CD4-positive, alpha-beta T cell (primary cell): ENCODE measurements at regions of chr18 and their contacts with region 1.

Region 1: DNA sequence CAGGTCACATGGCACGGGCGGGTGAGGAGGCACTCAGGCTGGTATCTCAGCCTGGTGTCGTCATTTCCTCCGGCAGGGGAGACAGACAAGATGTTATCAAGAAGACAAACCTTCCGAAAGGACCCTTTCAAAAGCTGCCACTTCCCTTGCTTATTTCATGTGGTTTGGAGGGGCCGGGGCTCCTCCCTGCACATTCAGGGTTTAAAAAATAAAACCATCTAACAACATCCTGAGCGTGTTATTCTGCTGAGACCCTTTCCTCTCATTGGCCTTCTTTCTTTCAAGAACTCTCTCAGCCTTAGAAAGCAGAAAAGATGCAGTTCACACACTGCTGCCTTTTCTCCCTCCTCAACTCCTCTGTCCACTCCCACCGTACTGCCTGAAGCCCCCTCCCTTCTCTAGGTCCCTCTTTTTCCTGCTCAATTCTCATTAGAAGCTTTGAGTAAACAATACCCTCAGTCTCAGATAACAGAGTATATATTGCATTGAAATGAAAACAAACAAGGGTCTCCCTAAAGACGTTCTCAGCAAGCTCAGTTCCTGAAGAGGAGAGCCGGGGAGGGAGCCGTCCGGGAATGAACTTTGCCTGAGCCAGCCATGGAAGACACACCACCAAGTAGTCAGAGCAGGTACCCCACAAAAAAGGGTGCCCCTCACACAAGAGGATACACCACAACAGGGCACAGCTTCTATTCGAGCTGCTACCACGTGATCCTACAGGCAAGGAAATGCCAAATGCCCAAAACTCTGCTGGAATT is 9.7 kb downstream of the SMAD7 start:
- DNase-seq: peak; percentile 71 to 97 (median 80)
- ATAC-seq: peak; percentile 83
- H3K4me3 ChIP-seq: peak overlapping the region; percentile 26
- H3K4me3 Mint-ChIP-seq: peak overlapping the region; percentile 87
- H3K27ac ChIP-seq: peak overlapping the region; percentile 51
- H3K27ac Mint-ChIP-seq: peak overlapping the region; percentile 92
- H3K4me1 ChIP-seq: peaks cover 93% of the 10 kb centered on the region
- H3K4me1 Mint-ChIP-seq: peaks cover 92% of the 10 kb centered on the region
- H3K27me3 ChIP-seq: no peaks in the 10 kb centered on the region
- H3K27me3 Mint-ChIP-seq: no peaks in the 10 kb centered on the region
- CTCF ChIP-seq: no peak

Region 2: GRCh38 chr18:48007955-48008701 is 932.9 kb before region 1 on chr18:
- CTCF ChIA-PET with region 1: no interaction called
- POLR2A ChIA-PET with region 1: no interaction called
- intact Hi-C with region 1: no loop called
- DNase-seq: peak; percentile 12 to 76 (median 32)
- ATAC-seq: peak; percentile 89
- H3K4me3 ChIP-seq: peak overlapping the region; percentile 46
- H3K4me3 Mint-ChIP-seq: peak overlapping the region; percentile 77
- H3K27ac ChIP-seq: no peak overlapping the region
- H3K27ac Mint-ChIP-seq: no peak overlapping the region
- H3K4me1 ChIP-seq: peaks cover 12% of the 10 kb centered on the region
- H3K4me1 Mint-ChIP-seq: peaks cover 6% of the 10 kb centered on the region
- H3K27me3 ChIP-seq: peaks cover 10% of the 10 kb centered on the region in 2 experiments
- H3K27me3 Mint-ChIP-seq: peaks cover 19% of the 10 kb centered on the region
- CTCF ChIP-seq: peak; percentile 23

Region 3: GRCh38 chr18:48711651-48712486 is 229.2 kb before region 1 on chr18:
- CTCF ChIA-PET with region 1: no interaction called
- POLR2A ChIA-PET with region 1: no interaction called
- intact Hi-C with region 1: no loop called
- DNase-seq: peak in 6 of 14 experiments; percentile 4 to 54 (median 18)
- ATAC-seq: no peak
- H3K4me3 ChIP-seq: no peak overlapping the region
- H3K4me3 Mint-ChIP-seq: no peak overlapping the region
- H3K27ac ChIP-seq: no peak overlapping the region
- H3K27ac Mint-ChIP-seq: no peak overlapping the region
- H3K4me1 ChIP-seq: peaks cover 8% of the 10 kb centered on the region
- H3K4me1 Mint-ChIP-seq: no peaks in the 10 kb centered on the region
- H3K27me3 ChIP-seq: no peaks in the 10 kb centered on the region
- H3K27me3 Mint-ChIP-seq: no peaks in the 10 kb centered on the region
- CTCF ChIP-seq: peak; percentile 11

Region 4: DNA sequence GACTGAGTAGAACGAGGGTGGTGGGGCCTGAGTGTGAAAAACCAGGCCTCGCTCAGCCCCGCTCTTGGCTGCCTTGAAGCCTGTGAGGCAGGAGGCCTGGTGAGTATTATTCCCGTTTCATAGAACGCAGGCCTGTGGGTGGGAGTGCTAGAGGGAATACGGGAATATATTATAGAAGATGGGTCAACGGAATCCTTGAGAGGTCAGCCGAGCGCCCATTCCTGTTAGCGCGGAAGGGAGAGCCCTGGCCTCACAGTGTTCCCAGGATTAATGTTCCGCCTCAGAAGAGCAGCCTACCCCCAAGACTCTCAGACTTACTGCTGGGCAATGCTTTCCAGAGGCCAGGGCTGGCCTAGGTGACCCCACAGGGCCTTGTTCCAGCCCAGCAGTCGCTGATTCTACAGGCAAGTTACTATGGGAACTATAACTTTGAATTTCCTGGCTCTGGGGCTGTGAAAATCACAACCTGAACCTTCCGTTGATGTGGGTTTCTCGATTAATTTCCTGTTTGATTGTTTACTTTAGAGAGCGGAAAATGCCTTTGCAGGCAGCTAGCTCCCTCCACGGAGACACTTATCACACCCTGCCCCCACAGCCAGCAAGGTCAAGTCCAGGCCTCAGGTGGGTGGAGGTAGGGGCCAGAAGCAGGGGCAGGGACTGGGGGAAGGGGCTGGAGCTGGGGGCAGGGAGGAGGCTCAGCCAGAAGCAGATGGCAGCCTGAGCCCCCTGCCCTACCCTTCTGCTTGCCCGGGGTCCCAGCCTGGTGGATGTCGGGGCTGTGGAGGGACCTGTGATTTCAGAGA is 98.6 kb before region 1 on chr18:
- CTCF ChIA-PET with region 1: no interaction called
- POLR2A ChIA-PET with region 1: interaction called, 12 read pairs
- intact Hi-C with region 1: loop called in 1 of 2 experiments (anchors 5 kb)
- DNase-seq: peak in 13 of 14 experiments; percentile 27 to 94 (median 37)
- ATAC-seq: peak; percentile 87
- H3K4me3 ChIP-seq: peak overlapping the region; percentile 13
- H3K4me3 Mint-ChIP-seq: peak overlapping the region; percentile 40
- H3K27ac ChIP-seq: peak overlapping the region; percentile 58 to 81
- H3K27ac Mint-ChIP-seq: peak overlapping the region; percentile 92
- H3K4me1 ChIP-seq: peaks cover 75% of the 10 kb centered on the region
- H3K4me1 Mint-ChIP-seq: peaks cover 88% of the 10 kb centered on the region
- H3K27me3 ChIP-seq: no peaks in the 10 kb centered on the region
- H3K27me3 Mint-ChIP-seq: no peaks in the 10 kb centered on the region
- CTCF ChIP-seq: no peak

Region 5: GRCh38 chr18:48922801-48923730 is 18.0 kb before region 1 on chr18:
- CTCF ChIA-PET with region 1: interaction called, 4 read pairs
- POLR2A ChIA-PET with region 1: interaction called, 28 read pairs
- intact Hi-C with region 1: no loop called
- DNase-seq: peak in 4 of 14 experiments; percentile 44 to 68 (median 54)
- ATAC-seq: no peak
- H3K4me3 ChIP-seq: peak overlapping the region; percentile 43
- H3K4me3 Mint-ChIP-seq: peak overlapping the region; percentile 85
- H3K27ac ChIP-seq: no peak overlapping the region
- H3K27ac Mint-ChIP-seq: peak overlapping the region; percentile 74
- H3K4me1 ChIP-seq: peaks cover 67% of the 10 kb centered on the region
- H3K4me1 Mint-ChIP-seq: peaks cover 79% of the 10 kb centered on the region
- H3K27me3 ChIP-seq: no peaks in the 10 kb centered on the region
- H3K27me3 Mint-ChIP-seq: no peaks in the 10 kb centered on the region
- CTCF ChIP-seq: no peak

Region 6: GRCh38 chr18:48928787-48929186 is 12.2 kb before region 1 on chr18:
- CTCF ChIA-PET with region 1: interaction called, 5 read pairs
- POLR2A ChIA-PET with region 1: interaction called, 28 read pairs
- intact Hi-C with region 1: loop called in 1 of 2 experiments (anchors 1 kb)
- DNase-seq: peak; percentile 54 to 93 (median 80)
- ATAC-seq: peak; percentile 89
- H3K4me3 ChIP-seq: peak overlapping the region; percentile 31
- H3K4me3 Mint-ChIP-seq: peak overlapping the region; percentile 86
- H3K27ac ChIP-seq: peak overlapping the region in 1 of 2 donors; percentile 24
- H3K27ac Mint-ChIP-seq: peak overlapping the region; percentile 84
- H3K4me1 ChIP-seq: peaks cover 94% of the 10 kb centered on the region
- H3K4me1 Mint-ChIP-seq: peaks cover 97% of the 10 kb centered on the region
- H3K27me3 ChIP-seq: no peaks in the 10 kb centered on the region
- H3K27me3 Mint-ChIP-seq: no peaks in the 10 kb centered on the region
- CTCF ChIP-seq: no peak

Region 7: DNA sequence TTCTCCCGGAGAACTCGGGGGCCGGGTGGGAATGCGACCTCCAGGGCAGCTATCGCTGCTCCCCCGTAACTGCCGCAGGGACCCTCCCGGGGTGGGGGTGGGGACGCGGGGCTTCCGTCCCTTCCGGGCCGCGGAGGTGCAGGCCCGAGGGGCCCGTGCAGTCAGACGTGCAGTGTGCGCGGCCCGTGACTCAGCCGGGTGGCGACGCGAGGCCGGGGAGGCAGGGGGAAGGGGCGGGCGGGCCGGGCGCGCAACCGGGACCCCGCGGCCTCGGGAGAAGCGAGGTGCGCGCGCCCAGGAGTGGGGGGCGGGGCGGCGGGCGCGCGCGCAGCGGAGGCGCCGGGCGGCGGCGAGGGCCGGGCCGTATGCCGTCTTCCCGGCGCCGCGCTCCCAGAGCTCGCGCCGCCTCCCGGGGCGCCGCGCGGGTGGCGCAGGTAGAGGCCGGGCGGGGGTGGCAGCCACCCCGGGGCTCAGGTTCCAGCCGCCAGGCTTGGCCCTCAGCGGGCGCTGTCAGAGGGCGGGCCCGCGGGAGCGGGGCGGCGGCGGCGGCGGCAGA is 34.7 kb after region 1 on chr18:
- CTCF ChIA-PET with region 1: no interaction called
- POLR2A ChIA-PET with region 1: no interaction called
- intact Hi-C with region 1: loop called in 1 of 2 experiments (anchors 5 kb)
- DNase-seq: peak; percentile 18 to 84 (median 48)
- ATAC-seq: peak; percentile 80
- H3K4me3 ChIP-seq: peak overlapping the region; percentile 52
- H3K4me3 Mint-ChIP-seq: no peak overlapping the region
- H3K27ac ChIP-seq: no peak overlapping the region
- H3K27ac Mint-ChIP-seq: no peak overlapping the region
- H3K4me1 ChIP-seq: peaks cover 22% of the 10 kb centered on the region
- H3K4me1 Mint-ChIP-seq: peaks cover 14% of the 10 kb centered on the region
- H3K27me3 ChIP-seq: peaks cover 0 to 7% of the 10 kb centered on the region in 2 experiments
- H3K27me3 Mint-ChIP-seq: peaks cover 36% of the 10 kb centered on the region
- CTCF ChIP-seq: no peak

Region 8: DNA sequence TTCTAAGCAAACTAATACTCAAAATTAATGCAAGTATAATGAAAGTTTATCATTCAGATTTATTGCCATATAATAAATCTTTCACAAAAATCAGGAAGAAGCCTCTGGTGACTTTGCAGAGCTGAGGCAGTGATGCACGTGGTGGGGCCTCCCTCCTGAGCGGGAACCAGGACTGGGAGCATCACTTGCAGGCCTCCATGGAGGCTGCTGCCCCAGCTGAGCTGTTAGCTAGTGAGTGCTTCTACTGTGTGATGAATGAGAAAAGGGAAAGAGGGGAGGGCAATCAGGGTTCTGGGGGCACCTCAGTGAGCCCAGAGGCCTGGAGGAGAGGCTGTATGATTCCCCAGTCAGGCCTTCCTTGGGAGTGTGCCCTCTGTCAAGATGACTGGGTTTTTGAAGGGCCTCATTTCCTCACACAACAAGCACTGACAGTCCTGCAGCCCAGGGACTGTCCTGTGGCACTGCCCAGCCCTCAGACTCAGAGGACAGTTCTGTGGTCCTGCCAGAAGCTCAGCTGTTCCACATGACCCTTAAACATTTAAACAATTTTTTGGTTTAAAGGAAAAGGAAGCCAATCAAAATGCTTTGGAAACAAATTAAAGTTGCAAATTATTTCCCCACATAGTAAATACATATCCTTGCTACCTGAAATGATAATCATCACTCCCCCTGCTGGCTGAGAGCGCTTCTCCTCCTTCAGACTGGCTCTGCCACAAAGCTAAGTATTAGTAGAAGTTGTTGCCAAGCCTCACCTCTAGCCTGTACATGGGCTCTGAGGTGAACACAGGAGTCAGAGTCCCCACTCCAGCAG is 100.6 kb after region 1 on chr18:
- CTCF ChIA-PET with region 1: no interaction called
- POLR2A ChIA-PET with region 1: no interaction called
- intact Hi-C with region 1: loop called in 1 of 2 experiments (anchors 5 kb)
- DNase-seq: peak; percentile 27 to 73 (median 52)
- ATAC-seq: peak; percentile 68
- H3K4me3 ChIP-seq: no peak overlapping the region
- H3K4me3 Mint-ChIP-seq: no peak overlapping the region
- H3K27ac ChIP-seq: no peak overlapping the region
- H3K27ac Mint-ChIP-seq: no peak overlapping the region
- H3K4me1 ChIP-seq: no peaks in the 10 kb centered on the region
- H3K4me1 Mint-ChIP-seq: peaks cover 8% of the 10 kb centered on the region
- H3K27me3 ChIP-seq: no peaks in the 10 kb centered on the region
- H3K27me3 Mint-ChIP-seq: no peaks in the 10 kb centered on the region
- CTCF ChIP-seq: peak; percentile 60

Region 9: DNA sequence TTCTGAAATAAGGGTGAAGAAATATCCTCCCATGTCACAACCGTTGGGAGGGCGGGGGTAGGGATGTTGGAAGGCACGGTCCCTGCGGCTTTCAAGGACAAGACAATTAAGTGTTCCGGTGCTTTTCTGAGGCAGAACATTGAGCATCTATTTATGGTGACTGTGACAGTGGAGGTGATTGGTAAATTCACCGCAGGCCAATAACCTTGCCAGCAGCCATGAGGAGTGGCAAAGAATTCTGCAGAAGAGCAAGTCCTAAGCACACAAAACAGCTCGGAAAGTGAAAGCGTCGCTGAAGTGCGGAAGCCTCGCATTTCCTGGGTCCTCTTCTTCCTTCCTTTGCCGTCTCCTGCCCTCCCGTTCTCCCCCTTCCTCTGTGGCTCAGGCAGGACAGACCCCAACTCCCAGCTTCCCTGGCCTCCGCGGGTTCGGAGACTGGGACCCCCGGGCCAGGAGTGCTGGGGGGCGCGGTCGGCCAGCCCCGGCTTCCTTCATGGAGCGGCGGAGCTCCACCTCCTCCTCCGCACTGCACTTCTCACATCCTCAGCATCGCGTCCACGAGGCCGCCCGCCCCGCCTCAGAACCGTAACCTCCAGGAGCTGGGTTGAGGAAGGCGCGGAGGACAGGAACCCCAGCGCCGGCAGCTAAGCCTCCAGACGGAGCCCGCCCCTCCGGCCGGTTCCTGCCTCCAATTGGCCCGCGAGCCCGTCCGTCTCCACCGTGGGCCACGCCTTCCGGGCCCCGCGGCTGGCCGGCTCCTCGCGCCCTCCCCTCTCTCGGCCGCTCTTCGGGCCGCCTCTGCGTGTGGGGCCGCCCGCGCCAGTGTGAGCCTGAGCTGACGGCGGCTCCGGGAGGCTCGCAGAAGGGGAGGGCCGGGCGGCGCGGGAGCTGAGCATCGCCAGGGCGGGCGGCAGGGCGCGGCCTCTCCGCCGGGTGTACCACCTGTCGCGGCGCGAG is 1937.6 kb after region 1 on chr18 and contains the start of gene ME2:
- CTCF ChIA-PET with region 1: no interaction called
- POLR2A ChIA-PET with region 1: no interaction called
- intact Hi-C with region 1: loop called in 1 of 2 experiments (anchors 5 kb)
- DNase-seq: peak; percentile 77 to 94 (median 88)
- ATAC-seq: peak; percentile 90
- H3K4me3 ChIP-seq: peak within 1 kb of the TSS; percentile 93
- H3K4me3 Mint-ChIP-seq: peak within 1 kb of the TSS; percentile 98
- H3K27ac ChIP-seq: peak within 1 kb of the TSS; percentile 95 to 97
- H3K27ac Mint-ChIP-seq: peak within 1 kb of the TSS; percentile 97
- H3K4me1 ChIP-seq: peaks cover 32% of the 10 kb centered on the region
- H3K4me1 Mint-ChIP-seq: peaks cover 28% of the 10 kb centered on the region
- H3K27me3 ChIP-seq: no peaks in the 10 kb centered on the region
- H3K27me3 Mint-ChIP-seq: peaks cover 6% of the 10 kb centered on the region
- CTCF ChIP-seq: no peak
- total RNA-seq, gene ME2: 15.6 to 16.1 TPM